Heart right ventricle (tissue), 16 donors: ENCODE measurements at regions of chr9 and their contacts with region 1.

Region 1: GRCh38 chr9:129080602-129081387 is at the start of gene DOLPP1:
- DNase-seq: peak; percentile 99
- ATAC-seq: peak; percentile 96 to 99 (median 99)
- H3K4me3 ChIP-seq: peak within 1 kb of the TSS; percentile 63 to 98 (median 76)
- H3K27ac ChIP-seq: peak within 1 kb of the TSS; percentile 30 to 91 (median 86)
- H3K4me1 ChIP-seq: peaks cover 11 to 29% (median 19%) of the 10 kb centered on the region in 9 donors
- H3K27me3 ChIP-seq: no peaks in the 10 kb centered on the region
- CTCF ChIP-seq: no peak
- total RNA-seq, gene DOLPP1: 3.1 to 7.0 (median 5.0) TPM

Region 2: GRCh38 chr9:129036241-129036922 is 44.4 kb before region 1 on chr9 and contains the start of gene MIGA2:
- intact Hi-C with region 1: loop called in 1 of 10 experiments (anchors 2 kb)
- DNase-seq: peak; percentile 95 to 99
- ATAC-seq: peak; percentile 96 to 99 (median 98)
- H3K4me3 ChIP-seq: peak within 1 kb of the TSS; percentile 71 to 99 (median 94)
- H3K27ac ChIP-seq: peak within 1 kb of the TSS; percentile 57 to 91 (median 86)
- H3K4me1 ChIP-seq: peaks cover 8 to 34% (median 23%) of the 10 kb centered on the region in 9 donors
- H3K27me3 ChIP-seq: no peaks in the 10 kb centered on the region
- CTCF ChIP-seq: no peak
- total RNA-seq, gene MIGA2: 30.4 to 46.0 (median 34.5) TPM